Dorsolateral prefrontal cortex (tissue), 120 donors: ENCODE measurements at regions of chr11 and their contacts with region 1.

Region 1: GRCh38 chr11:79160791-79161403 is 279.9 kb downstream of the TENM4 start:
- DNase-seq: no peak
- H3K4me3 ChIP-seq: no peak overlapping the region
- H3K27ac ChIP-seq: no peak overlapping the region
- H3K27me3 ChIP-seq: no peaks in the 10 kb centered on the region
- CTCF ChIP-seq: peak in 44 of 56 donors; percentile 22 to 71 (median 44)

Region 2: DNA sequence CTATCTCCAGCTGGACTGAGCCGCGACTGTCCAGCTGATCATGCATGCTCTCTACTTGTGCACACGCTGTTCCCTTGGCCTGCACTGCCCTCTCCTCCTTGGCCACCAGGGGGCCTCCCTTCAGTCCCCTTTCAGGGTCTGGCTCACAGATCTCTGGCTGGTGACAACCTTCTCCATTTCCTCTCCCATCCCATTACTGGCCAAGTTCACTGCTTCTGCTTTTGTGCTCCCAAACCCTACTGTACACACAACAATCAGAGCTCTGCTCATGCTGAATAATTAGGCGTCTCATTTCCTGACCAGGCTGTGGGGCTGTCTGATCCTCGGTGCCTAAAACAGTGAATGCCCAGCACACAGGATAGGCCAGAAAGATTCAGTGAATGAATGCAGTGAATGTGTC is 362.2 kb before region 1 on chr11:
- intact Hi-C with region 1: loop called in 1 of 2 experiments (anchors 10 kb)
- DNase-seq: peak in 8 of 10 donors; percentile 47 to 80 (median 63)
- H3K4me3 ChIP-seq: no peak overlapping the region
- H3K27ac ChIP-seq: peak overlapping the region in 2 of 59 donors; percentile 13 to 34
- H3K27me3 ChIP-seq: no peaks in the 10 kb centered on the region
- CTCF ChIP-seq: peak; percentile 40 to 92 (median 80)

Region 3: GRCh38 chr11:79062814-79063762 is 97.8 kb before region 1 on chr11:
- intact Hi-C with region 1: loop called in 1 of 2 experiments (anchors 5 kb)
- DNase-seq: peak in 1 of 10 donors; percentile 46
- H3K4me3 ChIP-seq: no peak overlapping the region
- H3K27ac ChIP-seq: no peak overlapping the region
- H3K27me3 ChIP-seq: no peaks in the 10 kb centered on the region
- CTCF ChIP-seq: peak in 50 of 56 donors; percentile 12 to 67 (median 48)

Region 4: DNA sequence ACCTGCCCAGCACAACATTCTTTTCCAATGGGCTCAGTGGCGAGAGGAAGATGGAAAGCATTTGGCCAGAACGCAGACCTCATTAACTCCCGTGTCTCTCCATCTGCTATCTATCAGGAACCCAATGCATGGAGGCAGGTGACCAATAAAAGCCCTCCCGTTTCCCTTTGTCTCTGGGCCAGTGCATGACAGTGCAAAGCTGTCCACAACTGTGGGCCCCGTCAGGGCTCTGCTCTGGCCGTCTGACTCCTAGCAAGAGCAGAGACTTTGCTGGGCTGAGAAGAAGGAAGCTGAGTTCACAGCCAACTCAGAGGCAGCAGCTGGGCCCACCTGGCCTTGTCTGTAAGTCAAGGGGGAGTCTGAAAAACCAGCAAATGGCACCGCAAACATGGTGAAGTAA is 102.1 kb after region 1 on chr11:
- intact Hi-C with region 1: no loop called
- DNase-seq: peak in 1 of 10 donors; percentile 7
- H3K4me3 ChIP-seq: no peak overlapping the region
- H3K27ac ChIP-seq: no peak overlapping the region
- H3K27me3 ChIP-seq: peaks cover 0 to 9% (median 0%) of the 10 kb centered on the region in 45 donors
- CTCF ChIP-seq: no peak